CD8-positive, alpha-beta memory T cell (primary cell): ENCODE measurements at regions of chr19 and their contacts with region 1.

Region 1: GRCh38 chr19:46840136-46840942 is 10.3 kb downstream of the AP2S1 start:
- DNase-seq: peak; percentile 28 to 64 (median 49)
- H3K4me3 ChIP-seq: no peak overlapping the region
- H3K4me3 Mint-ChIP-seq: no peak overlapping the region
- H3K27ac ChIP-seq: no peak overlapping the region
- H3K27ac Mint-ChIP-seq: peak overlapping the region in 4 of 8 donors; percentile 24 to 61 (median 44)
- H3K4me1 ChIP-seq: no peaks in the 10 kb centered on the region
- H3K4me1 Mint-ChIP-seq: peaks cover 0 to 5% (median 0%) of the 10 kb centered on the region in 3 donors
- H3K27me3 ChIP-seq: no peaks in the 10 kb centered on the region
- H3K27me3 Mint-ChIP-seq: peaks cover 0 to 2% of the 10 kb centered on the region in 2 donors

Region 2: DNA sequence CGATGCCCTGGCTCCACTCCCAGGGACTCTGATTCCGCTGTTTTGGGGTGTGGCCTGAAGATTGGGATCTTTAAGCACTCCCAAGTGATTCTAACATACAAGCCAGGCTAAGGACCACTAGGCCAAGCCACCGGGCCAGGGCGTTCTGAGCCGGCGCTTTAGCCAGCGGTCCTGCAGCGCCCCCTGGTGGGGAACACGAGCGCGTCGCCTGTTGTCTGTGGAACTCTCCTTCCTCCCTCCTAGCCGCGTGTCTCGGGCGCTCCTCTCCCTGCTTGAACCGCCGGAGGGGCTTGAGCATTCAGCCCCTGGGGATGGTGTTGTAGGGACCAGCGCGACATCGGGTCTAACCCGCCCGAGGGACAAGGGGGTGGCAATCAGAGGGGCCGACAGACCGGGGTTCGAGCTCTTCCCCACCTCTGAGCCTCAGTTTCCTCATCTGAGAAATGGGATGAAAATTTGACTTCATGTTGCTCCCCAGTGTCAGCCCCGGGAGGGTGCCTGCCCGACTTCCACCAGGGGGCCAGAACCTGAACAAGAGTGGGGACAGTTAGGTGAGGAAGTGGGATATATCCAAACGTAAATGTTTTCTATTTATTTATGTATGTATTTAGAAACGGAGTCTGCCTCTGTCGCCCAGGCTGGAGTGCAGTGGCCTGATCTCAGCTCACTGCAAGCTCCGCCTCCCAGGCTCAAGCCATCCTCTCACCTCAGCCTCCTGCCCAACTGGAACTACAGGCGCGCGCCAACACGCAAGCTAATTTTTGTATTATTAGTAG is 326.7 kb before region 1 on chr19:
- CTCF ChIA-PET with region 1: no interaction called
- POLR2A ChIA-PET with region 1: no interaction called
- DNase-seq: peak in 3 of 5 donors; percentile 69 to 82 (median 76)
- H3K4me3 ChIP-seq: no peak overlapping the region
- H3K4me3 Mint-ChIP-seq: no peak overlapping the region
- H3K27ac ChIP-seq: no peak overlapping the region
- H3K27ac Mint-ChIP-seq: peak overlapping the region in 1 of 8 donors; percentile 46
- H3K4me1 ChIP-seq: peaks cover 9% of the 10 kb centered on the region
- H3K4me1 Mint-ChIP-seq: peaks cover 3 to 13% (median 9%) of the 10 kb centered on the region in 3 donors
- H3K27me3 ChIP-seq: peaks cover 6% of the 10 kb centered on the region
- H3K27me3 Mint-ChIP-seq: peaks cover 22 to 39% of the 10 kb centered on the region in 2 donors

Region 3: DNA sequence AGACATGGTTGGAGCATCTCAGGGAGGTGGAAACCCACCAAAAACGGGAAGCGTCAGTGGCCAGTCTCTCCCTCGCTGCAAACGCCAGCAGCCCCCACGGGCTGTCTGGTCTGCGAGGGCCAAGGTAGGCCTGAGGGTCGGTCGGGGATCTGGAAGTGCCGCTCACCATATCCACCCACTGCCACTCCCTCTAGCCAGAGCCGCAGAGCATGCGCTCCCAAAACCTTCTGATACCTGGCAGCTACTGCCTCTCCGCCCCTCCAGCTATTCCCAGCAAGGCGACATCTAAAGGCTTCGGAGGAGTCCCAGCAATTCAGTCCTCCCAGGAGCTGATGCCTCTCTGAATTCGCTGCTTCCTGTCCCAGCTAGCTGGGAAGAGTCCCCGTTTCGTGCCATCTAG is 98.9 kb before region 1 on chr19:
- CTCF ChIA-PET with region 1: interaction called, 11 read pairs
- POLR2A ChIA-PET with region 1: no interaction called
- DNase-seq: no peak
- H3K4me3 ChIP-seq: no peak overlapping the region
- H3K4me3 Mint-ChIP-seq: peak overlapping the region in 1 of 7 donors; percentile 78
- H3K27ac ChIP-seq: no peak overlapping the region
- H3K27ac Mint-ChIP-seq: peak overlapping the region in 1 of 8 donors; percentile 47
- H3K4me1 ChIP-seq: peaks cover 17% of the 10 kb centered on the region
- H3K4me1 Mint-ChIP-seq: peaks cover 47 to 61% (median 56%) of the 10 kb centered on the region in 3 donors
- H3K27me3 ChIP-seq: no peaks in the 10 kb centered on the region
- H3K27me3 Mint-ChIP-seq: no peaks in the 10 kb centered on the region

Region 4: DNA sequence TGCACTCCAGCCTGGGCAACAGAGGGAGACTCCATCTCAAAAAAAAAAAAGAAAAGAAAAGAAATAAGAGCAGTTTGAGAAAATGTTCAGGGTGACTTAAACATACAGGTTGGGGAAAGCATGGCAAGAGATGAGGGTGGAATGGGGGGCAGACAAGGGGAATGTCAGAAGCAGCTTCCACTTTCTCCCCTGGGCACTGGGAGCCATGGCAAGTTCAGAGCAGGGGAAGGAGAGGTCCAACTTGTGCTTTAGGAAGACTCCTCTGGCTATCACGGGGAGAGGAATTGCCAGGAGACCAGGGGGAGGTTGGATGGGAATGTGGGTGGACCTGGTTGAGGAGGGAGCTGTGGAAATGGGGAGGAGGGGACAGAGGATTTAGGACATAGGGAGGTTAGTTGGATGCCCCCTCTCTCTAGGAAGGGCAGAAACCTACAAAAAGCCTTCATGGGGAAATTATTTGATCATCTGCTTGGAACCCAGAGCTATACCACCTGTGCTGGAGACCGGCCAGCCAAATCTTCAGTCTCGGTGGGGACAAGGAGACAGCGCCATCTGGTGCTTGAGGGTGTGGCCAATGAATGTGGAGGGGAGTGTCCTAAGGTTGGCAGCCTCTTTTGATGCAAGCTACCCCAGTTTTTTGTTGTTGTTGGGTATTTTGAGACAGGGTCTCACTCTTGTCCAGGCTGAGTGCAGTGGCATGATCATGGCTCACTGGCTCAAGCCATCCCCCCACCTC is 86.8 kb before region 1 on chr19:
- CTCF ChIA-PET with region 1: interaction called, 89 read pairs
- POLR2A ChIA-PET with region 1: interaction called, 10 read pairs
- DNase-seq: peak; percentile 45 to 76 (median 54)
- H3K4me3 ChIP-seq: no peak overlapping the region
- H3K4me3 Mint-ChIP-seq: peak overlapping the region in 1 of 7 donors; percentile 9
- H3K27ac ChIP-seq: no peak overlapping the region
- H3K27ac Mint-ChIP-seq: peak overlapping the region in 2 of 8 donors; percentile 72 to 89
- H3K4me1 ChIP-seq: no peaks in the 10 kb centered on the region
- H3K4me1 Mint-ChIP-seq: peaks cover 9 to 18% (median 13%) of the 10 kb centered on the region in 3 donors
- H3K27me3 ChIP-seq: no peaks in the 10 kb centered on the region
- H3K27me3 Mint-ChIP-seq: no peaks in the 10 kb centered on the region

Region 5: DNA sequence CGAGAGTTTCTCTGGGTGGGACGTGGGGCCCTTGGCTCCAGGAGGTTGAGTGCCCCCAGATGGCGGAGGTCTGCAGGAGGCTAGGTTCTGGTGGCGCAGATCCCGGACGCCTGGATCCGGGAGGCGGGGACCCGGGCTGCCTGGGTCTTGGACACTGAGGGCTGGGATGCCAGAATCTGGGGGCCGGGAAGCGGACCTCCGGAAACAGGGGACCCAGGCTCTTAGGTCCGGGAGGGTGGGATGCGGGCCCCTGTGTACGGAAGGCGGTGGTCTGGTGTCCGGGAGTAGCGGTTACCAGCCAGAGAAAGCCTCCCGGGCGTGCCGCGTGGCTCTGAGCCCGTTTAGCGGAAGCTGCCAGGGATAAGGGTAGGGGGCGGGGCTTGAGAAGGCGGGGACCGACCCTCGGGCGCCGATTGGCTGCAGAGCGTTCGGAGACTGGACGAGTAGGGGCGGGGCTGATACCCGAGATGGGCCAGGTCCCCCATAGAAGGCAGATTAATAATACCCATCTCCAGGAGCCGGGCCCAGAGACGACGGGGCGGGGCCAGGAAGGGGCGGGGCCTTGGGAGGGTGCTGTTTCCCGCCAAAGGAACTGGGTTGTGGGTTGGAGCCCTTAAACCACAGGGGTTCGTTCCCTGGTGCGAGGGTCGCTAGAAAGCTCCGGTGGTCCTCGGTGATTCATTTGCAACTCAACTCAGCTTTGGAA is 51.9 kb before region 1 on chr19 and contains the start of gene SLC1A5:
- CTCF ChIA-PET with region 1: interaction called, 16 read pairs
- POLR2A ChIA-PET with region 1: interaction called, 8 read pairs
- DNase-seq: peak; percentile 85 to 98 (median 97)
- H3K4me3 ChIP-seq: peak within 1 kb of the TSS; percentile 88
- H3K4me3 Mint-ChIP-seq: peak within 1 kb of the TSS; percentile 87 to 97 (median 92)
- H3K27ac ChIP-seq: peak within 1 kb of the TSS; percentile 92
- H3K27ac Mint-ChIP-seq: peak within 1 kb of the TSS; percentile 74 to 100 (median 96)
- H3K4me1 ChIP-seq: peaks cover 54% of the 10 kb centered on the region
- H3K4me1 Mint-ChIP-seq: peaks cover 53 to 62% (median 61%) of the 10 kb centered on the region in 3 donors
- H3K27me3 ChIP-seq: no peaks in the 10 kb centered on the region
- H3K27me3 Mint-ChIP-seq: no peaks in the 10 kb centered on the region
- total RNA-seq, gene SLC1A5: 377 to 380 TPM

Region 6: DNA sequence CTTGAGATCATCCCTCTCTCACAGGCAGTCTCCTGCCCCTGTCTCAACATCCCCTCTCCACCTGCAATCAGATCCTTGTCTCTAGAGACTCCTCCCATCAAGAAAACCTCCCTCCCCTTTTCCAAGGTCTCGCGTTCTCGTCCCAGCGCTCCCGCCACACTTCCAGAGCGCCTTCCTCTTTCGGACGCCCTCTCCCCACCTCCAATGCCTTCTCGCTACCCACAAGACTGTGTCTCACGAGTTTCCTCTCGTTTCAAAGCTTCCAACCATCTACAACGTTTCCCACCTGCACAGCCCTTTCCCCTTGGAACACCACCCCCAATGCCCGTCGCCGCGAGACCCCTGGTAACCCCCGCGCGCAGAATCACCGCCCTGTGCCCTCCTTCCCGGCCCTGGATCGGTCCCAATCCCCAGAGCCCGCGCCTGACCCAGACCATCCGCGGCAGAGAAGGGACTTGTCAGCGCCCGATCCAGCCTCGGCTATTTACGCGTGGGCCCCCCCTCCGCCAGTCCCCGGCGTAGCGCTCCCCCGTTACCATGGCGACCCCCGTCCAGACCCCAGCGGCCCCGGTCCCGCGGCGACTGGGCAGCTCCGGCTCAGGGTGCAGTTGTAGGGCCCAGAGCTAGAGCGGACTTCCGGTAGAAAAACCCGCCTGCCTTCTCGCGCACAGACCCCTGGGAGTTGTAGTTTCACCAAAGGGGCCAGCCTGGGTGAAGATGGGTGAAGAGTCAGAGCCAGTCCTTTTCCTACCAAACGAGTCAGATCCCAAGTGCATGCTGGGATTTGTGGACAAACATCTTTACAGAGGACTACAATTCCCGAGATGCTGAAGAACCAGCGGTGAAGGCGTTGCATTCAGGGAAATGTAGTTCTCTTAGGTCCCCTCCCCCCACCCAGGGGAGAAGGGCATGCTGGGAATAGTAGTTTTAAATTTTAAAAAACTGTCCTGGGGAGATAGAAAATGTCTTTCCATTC is 10.2 kb after region 1 on chr19 and contains the start of gene AP2S1:
- CTCF ChIA-PET with region 1: interaction called, 15 read pairs
- POLR2A ChIA-PET with region 1: interaction called, 15 read pairs
- DNase-seq: peak; percentile 84 to 96 (median 93)
- H3K4me3 ChIP-seq: peak within 1 kb of the TSS; percentile 86
- H3K4me3 Mint-ChIP-seq: peak within 1 kb of the TSS; percentile 86 to 95 (median 93)
- H3K27ac ChIP-seq: peak within 1 kb of the TSS; percentile 71
- H3K27ac Mint-ChIP-seq: peak within 1 kb of the TSS; percentile 54 to 98 (median 90)
- H3K4me1 ChIP-seq: peaks cover 13% of the 10 kb centered on the region
- H3K4me1 Mint-ChIP-seq: peaks cover 19 to 27% (median 25%) of the 10 kb centered on the region in 3 donors
- H3K27me3 ChIP-seq: no peaks in the 10 kb centered on the region
- H3K27me3 Mint-ChIP-seq: peaks cover 0 to 1% of the 10 kb centered on the region in 2 donors
- total RNA-seq, gene AP2S1: 121 TPM